Activated naive CD4-positive, alpha-beta T cell treated with anti-CD3 and anti-CD28 coated beads for 36 hours (primary cell): ENCODE measurements at regions of chr10 and their contacts with region 1.

Region 1: GRCh38 chr10:1109795-1110673 is 53.8 kb downstream of the WDR37 start:
- DNase-seq: peak; percentile 90
- H3K4me3 Mint-ChIP-seq: peak overlapping the region; percentile 30
- H3K27ac Mint-ChIP-seq: peak overlapping the region; percentile 78
- H3K4me1 Mint-ChIP-seq: peaks cover 30% of the 10 kb centered on the region
- H3K27me3 Mint-ChIP-seq: no peaks in the 10 kb centered on the region

Region 2: DNA sequence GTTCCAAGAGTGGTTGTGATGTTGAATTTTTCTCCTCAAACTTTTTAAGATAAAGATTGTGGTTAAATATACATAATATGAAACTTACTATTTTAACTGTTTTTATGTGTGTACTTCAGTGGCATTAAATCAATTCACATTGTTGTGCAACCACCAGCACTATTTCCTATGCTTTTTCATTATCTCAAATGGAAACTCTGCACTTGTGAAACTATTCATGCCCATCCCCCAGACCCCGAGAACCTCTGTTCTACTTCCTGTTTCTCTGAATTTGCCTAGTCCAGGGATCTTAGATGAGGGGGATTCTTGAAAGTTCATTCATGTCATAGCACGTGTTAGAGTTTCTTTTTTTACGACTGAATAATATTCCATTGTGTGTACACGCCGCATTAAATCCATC is 13.2 kb after region 1 on chr10:
- CTCF ChIA-PET with region 1: interaction called, 12 read pairs
- intact Hi-C with region 1: loop called (anchors 1 kb)
- DNase-seq: peak; percentile 48
- H3K4me3 Mint-ChIP-seq: no peak overlapping the region
- H3K27ac Mint-ChIP-seq: peak overlapping the region; percentile 32
- H3K4me1 Mint-ChIP-seq: peaks cover 34% of the 10 kb centered on the region
- H3K27me3 Mint-ChIP-seq: no peaks in the 10 kb centered on the region

Region 3: GRCh38 chr10:1358943-1359598 is 249.0 kb after region 1 on chr10:
- CTCF ChIA-PET with region 1: no interaction called
- intact Hi-C with region 1: loop called (anchors 1 kb)
- DNase-seq: peak; percentile 45
- H3K4me3 Mint-ChIP-seq: no peak overlapping the region
- H3K27ac Mint-ChIP-seq: peak overlapping the region; percentile 13
- H3K4me1 Mint-ChIP-seq: peaks cover 13% of the 10 kb centered on the region
- H3K27me3 Mint-ChIP-seq: peaks cover 15% of the 10 kb centered on the region

Region 4: DNA sequence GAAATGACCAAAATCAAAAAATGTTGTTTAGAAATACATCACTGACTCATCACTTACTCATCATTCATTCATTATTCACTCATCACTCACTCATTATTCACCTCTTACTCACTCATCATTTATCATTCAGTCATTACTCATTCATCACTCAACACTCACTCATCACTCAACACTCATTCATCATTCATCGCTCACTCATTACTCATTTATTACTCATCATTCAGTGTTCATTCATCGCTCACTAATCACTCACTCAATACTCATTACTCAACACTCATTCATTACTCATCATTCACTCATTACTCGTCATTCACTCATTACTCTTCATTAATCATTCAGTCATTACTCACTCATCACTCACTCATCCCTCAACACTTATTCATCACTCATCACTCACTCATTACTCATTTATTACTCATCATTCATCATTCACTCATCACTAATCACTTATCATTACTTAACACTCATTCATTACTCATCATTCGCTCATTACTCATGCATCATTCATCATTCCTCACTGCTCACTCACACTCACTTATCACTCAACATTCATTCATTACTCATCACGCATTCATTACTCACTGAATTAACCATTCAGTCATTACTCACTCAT is 388.8 kb after region 1 on chr10:
- CTCF ChIA-PET with region 1: no interaction called
- intact Hi-C with region 1: loop called (anchors 10 kb)
- DNase-seq: no peak
- H3K4me3 Mint-ChIP-seq: no peak overlapping the region
- H3K27ac Mint-ChIP-seq: no peak overlapping the region
- H3K4me1 Mint-ChIP-seq: no peaks in the 10 kb centered on the region
- H3K27me3 Mint-ChIP-seq: no peaks in the 10 kb centered on the region

Region 5: DNA sequence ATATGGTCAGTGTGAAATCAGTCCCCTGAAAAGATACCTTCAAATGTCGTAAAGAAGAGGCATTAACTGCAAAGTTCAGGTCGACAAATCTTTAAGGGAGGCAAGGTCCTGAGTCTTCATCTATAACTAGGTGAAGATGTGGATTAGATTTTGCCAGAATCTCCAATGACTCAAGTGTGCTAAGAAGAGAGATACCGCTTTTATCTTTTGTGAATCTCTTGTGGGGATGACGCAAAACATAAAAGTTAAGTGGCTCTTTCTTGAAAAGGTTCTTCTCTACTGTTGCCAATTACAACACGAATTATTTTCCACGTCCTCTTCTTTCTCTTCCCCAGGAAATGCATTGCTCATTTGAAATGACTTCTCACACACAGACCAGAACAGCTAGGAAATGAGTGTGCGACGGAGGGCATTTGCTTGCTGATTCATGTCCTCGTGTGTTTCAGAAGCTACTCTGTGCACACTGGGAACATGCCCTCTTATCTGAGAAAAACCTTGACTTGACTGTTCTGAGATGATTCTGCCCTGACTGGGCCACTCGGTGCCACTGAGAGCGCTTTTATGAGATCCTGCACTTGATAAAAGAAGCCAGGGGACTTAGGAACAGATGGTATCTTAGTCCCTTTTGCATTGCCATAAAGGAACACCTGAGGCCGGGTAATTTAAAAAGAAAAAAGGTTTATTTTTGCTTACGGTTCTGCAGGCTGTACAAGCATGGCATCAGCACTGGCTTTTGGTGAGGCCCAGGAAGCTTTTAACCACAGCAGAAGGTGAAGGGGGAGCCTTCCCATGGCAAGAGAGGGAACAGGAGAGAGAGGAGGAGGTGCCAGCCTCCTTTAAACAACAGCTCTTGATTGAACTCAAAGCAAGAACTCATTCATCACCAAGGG is 1787.8 kb after region 1 on chr10:
- CTCF ChIA-PET with region 1: no interaction called
- intact Hi-C with region 1: loop called (anchors 5 kb)
- DNase-seq: peak; percentile 33
- H3K4me3 Mint-ChIP-seq: no peak overlapping the region
- H3K27ac Mint-ChIP-seq: no peak overlapping the region
- H3K4me1 Mint-ChIP-seq: peaks cover 10% of the 10 kb centered on the region
- H3K27me3 Mint-ChIP-seq: peaks cover 11% of the 10 kb centered on the region